Transverse colon (tissue), 4 donors: ENCODE measurements at regions of chrX and their contacts with region 1.

Region 1: DNA sequence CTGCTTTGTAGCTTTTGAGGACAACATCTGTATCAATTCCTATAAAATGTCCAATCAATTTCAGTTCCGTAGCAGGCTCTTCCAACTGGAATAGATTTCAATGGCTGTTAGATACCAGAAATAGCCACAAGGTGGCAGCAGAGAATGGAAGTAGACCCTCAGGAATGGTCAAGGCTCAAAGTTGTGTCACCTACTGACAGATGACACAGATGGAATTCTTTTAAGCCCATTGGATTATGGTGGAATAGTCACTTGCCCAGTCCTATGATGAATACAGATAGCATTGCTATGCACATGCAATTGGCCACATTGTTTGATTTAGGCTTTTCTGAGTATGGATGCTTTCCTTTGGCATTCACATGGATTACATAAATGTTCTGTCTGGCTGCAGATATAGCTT is 130.4 kb upstream of the RADX start:
- DNase-seq: peak; percentile 35
- H3K4me3 ChIP-seq: no peak overlapping the region
- H3K27ac ChIP-seq: no peak overlapping the region
- H3K4me1 ChIP-seq: no peaks in the 10 kb centered on the region
- H3K27me3 ChIP-seq: no peaks in the 10 kb centered on the region
- CTCF ChIP-seq: peak; percentile 54 to 86 (median 63)
- EP300 ChIP-seq: no peak
- POLR2A ChIP-seq: no peak

Region 2: DNA sequence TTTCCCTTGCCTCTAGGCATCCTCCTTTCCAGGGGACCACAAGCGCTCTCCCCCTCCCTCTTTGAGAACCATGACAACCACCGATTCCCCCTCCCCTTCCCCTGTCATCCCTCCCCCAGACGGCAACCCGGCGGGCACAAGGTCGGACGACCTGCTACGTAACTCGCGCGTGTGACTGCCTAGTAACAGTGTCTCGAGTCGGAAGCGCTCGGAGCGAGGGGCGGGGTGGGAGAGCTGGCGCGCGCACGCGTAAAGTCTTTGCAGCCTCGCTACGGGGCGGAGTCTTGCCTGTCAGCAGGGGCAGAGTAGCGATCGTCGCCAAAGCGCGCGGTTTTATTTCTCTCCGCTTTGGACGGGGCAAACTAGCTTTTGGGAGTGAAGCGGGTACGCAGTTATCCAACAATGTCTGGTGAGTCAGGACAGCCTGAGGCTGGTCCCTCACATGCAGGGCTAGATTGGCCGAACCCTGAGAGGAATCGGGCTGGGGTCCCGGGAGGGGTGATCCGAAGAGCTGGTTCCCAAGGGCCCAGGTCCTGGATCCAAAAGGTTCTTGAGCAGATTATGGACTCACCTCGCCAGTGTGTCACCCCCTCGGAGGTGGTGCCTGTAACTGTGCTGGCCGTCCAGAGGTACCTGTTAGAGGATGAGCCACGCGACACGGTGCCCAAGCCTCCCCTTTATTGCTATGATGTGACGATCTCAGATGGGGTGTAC is 130.5 kb after region 1 on chrX and contains the start of gene RADX:
- in situ Hi-C with region 1: loop called in 2 of 4 experiments (anchors 25 kb)
- intact Hi-C with region 1: no loop called
- DNase-seq: peak; percentile 86
- H3K4me3 ChIP-seq: peak within 1 kb of the TSS; percentile 35 to 63 (median 42)
- H3K27ac ChIP-seq: peak within 1 kb of the TSS in 3 of 4 donors; percentile 20 to 50 (median 45)
- H3K4me1 ChIP-seq: no peaks in the 10 kb centered on the region
- H3K27me3 ChIP-seq: no peaks in the 10 kb centered on the region
- CTCF ChIP-seq: no peak
- EP300 ChIP-seq: no peak
- POLR2A ChIP-seq: peak; percentile 37
- total RNA-seq, gene RADX: 1.9 to 13.8 (median 4.6) TPM in 3 of 4 donors, not detected in the other

Region 3: DNA sequence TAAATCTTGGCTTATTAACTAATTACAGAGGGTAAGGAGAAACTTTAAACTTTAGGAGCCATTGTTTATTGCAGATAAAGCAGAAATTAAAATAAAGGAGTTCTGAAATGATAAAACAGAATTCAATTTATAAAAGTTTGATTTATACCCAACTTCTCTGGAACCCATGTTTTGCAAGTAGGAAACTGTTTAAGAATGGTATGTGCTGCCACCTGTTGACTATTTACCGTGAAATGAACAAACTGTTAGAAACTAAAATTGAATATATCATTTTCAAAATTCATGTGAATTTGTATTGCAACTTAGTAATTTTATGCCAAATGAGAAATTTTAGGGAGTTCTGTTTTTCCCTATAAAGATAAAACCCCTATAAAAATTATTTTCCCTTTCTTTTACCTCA is 310.2 kb after region 1 on chrX:
- in situ Hi-C with region 1: loop called in 3 of 4 experiments (anchors 25 kb)
- intact Hi-C with region 1: no loop called
- DNase-seq: no peak
- H3K4me3 ChIP-seq: no peak overlapping the region
- H3K27ac ChIP-seq: no peak overlapping the region
- H3K4me1 ChIP-seq: no peaks in the 10 kb centered on the region
- H3K27me3 ChIP-seq: no peaks in the 10 kb centered on the region
- CTCF ChIP-seq: peak in 4 of 5 experiments; percentile 11 to 19 (median 18)
- EP300 ChIP-seq: no peak
- POLR2A ChIP-seq: no peak